ENCODE measurements at regions of chr1 and their contacts with region 1.

Region 1: GRCh38 chr1:63189677-63190076 is 132.7 kb upstream of the FOXD3 start:
- DNase-seq: peak; percentile 24 to 62
- H3K4me3 ChIP-seq: no peak overlapping the region
- H3K4me1 ChIP-seq: no peaks in the 10 kb centered on the region
- H3K27me3 ChIP-seq: peaks cover 4% of the 10 kb centered on the region; the same call in 1 of the 2 replicates

Region 2: GRCh38 chr1:63442141-63442475 is 252.4 kb after region 1 on chr1:
- in situ Hi-C with region 1: loop called (anchors 25 kb)
- DNase-seq: no peak
- H3K4me3 ChIP-seq: no peak overlapping the region
- H3K4me1 ChIP-seq: peaks cover 2% of the 10 kb centered on the region
- H3K27me3 ChIP-seq: no peaks in the 10 kb centered on the region

Measured in HAP-1 (cell line).